ENCODE measurements at regions of chr11 and their contacts with region 1.

Region 1: DNA sequence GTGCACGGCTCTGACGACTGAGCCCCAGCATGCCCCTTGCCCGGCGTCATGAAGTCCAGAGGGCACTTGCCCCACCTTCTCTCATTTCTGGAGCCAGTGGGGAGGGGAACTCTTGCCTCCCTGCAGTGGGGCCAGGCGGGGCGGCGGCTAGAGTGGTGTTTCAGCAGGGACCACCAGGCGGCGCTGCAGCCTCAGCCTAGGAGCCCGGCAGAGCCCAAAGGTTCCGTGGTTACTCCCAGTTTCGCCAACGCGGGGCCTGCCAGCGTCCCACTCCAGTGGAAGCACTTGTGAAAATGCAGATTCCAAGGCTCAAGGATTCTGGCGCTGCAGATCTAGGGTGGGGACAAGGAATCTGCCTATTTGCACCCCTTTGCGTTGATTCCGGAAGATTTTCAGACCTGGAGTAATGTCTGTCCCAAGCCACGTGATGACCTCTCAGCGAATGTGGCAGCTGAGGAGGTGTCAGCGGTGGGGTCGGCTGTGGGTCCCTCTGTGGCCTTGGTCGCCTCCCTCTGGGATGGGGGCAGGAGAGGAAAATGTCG is 55.7 kb downstream of the CD82 start:
- DNase-seq: peak; percentile 68
- H3K4me3 Mint-ChIP-seq: no peak overlapping the region
- H3K27ac Mint-ChIP-seq: no peak overlapping the region
- H3K4me1 Mint-ChIP-seq: peaks cover 39% of the 10 kb centered on the region
- H3K27me3 Mint-ChIP-seq: no peaks in the 10 kb centered on the region

Region 2: GRCh38 chr11:44286268-44286880 is 334.8 kb before region 1 on chr11:
- CTCF ChIA-PET with region 1: no interaction called
- intact Hi-C with region 1: loop called (anchors 5 kb)
- DNase-seq: peak; percentile 77
- H3K4me3 Mint-ChIP-seq: no peak overlapping the region
- H3K27ac Mint-ChIP-seq: no peak overlapping the region
- H3K4me1 Mint-ChIP-seq: no peaks in the 10 kb centered on the region
- H3K27me3 Mint-ChIP-seq: no peaks in the 10 kb centered on the region

Region 3: DNA sequence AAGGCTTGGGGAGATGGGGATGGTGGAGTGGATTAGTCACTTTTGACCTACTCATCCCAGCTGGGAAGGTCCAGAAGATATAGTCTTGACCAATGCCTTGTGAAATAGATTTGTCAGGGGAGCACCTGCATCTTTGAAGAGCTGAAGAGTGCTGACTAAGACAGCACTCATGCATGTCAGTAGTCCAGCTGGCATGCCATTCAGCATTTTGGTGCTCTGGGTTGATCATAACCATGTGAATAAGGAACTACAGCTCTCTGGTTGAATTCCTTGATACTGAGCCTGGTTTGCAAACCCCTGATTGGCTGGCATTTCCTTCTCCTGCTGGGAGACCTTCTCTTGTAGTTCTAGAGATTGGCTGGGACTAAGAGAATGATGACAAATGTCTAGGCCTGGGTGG is 204.4 kb before region 1 on chr11:
- CTCF ChIA-PET with region 1: no interaction called
- intact Hi-C with region 1: no loop called
- DNase-seq: no peak
- H3K4me3 Mint-ChIP-seq: no peak overlapping the region
- H3K27ac Mint-ChIP-seq: no peak overlapping the region
- H3K4me1 Mint-ChIP-seq: no peaks in the 10 kb centered on the region
- H3K27me3 Mint-ChIP-seq: peaks cover 10% of the 10 kb centered on the region

Region 4: GRCh38 chr11:44556735-44557409 is 64.3 kb before region 1 on chr11:
- CTCF ChIA-PET with region 1: interaction called, 366 read pairs
- intact Hi-C with region 1: loop called (anchors 1 kb)
- DNase-seq: peak; percentile 85
- H3K4me3 Mint-ChIP-seq: no peak overlapping the region
- H3K27ac Mint-ChIP-seq: peak overlapping the region; percentile 83
- H3K4me1 Mint-ChIP-seq: peaks cover 25% of the 10 kb centered on the region
- H3K27me3 Mint-ChIP-seq: no peaks in the 10 kb centered on the region

Region 5: GRCh38 chr11:44596525-44597276 is 24.5 kb before region 1 on chr11:
- CTCF ChIA-PET with region 1: interaction called, 11 read pairs
- intact Hi-C with region 1: no loop called
- DNase-seq: peak; percentile 89
- H3K4me3 Mint-ChIP-seq: peak overlapping the region; percentile 39
- H3K27ac Mint-ChIP-seq: peak overlapping the region; percentile 88
- H3K4me1 Mint-ChIP-seq: peaks cover 81% of the 10 kb centered on the region
- H3K27me3 Mint-ChIP-seq: no peaks in the 10 kb centered on the region

Region 6: DNA sequence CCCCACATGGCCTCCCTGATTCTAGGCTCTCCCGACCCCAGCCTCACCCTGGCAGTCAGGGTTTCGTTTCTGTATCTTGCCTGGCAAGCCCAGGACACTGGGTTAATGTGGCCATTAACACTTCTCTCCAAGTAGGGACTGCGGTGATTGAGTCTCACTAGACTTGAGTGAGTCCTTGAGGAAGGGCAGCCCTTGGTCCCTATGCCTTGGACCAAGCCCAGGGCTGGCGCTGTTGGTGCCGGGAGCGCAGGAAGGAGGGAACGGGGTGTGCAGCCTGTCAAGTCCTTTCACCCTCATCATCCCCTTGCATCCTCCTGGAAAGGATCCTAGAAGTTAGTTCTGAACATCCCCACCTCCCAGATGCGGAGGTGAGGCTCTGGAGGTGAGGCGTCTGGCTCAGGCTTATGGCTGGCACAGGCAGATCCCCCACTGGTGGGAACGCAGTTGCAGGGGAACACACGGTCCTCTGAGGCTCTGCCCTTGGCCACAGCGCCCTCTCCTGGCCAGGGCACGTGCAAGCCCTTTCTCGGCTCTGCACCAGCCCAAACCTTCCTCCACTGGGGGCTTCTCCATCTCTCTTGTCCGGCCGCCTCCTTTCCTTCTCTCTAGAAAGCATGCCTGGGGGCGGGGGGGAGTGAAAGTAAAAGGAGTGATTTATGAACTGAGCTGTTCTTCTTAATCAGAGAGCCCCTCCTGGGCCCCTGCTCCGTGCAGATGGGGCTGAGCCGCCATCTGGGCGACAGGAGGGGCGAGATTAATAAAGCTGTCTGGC is 272.8 kb after region 1 on chr11:
- CTCF ChIA-PET with region 1: interaction called, 3 read pairs
- intact Hi-C with region 1: loop called (anchors 1 kb)
- DNase-seq: peak; percentile 73
- H3K4me3 Mint-ChIP-seq: no peak overlapping the region
- H3K27ac Mint-ChIP-seq: no peak overlapping the region
- H3K4me1 Mint-ChIP-seq: no peaks in the 10 kb centered on the region
- H3K27me3 Mint-ChIP-seq: no peaks in the 10 kb centered on the region

Region 7: DNA sequence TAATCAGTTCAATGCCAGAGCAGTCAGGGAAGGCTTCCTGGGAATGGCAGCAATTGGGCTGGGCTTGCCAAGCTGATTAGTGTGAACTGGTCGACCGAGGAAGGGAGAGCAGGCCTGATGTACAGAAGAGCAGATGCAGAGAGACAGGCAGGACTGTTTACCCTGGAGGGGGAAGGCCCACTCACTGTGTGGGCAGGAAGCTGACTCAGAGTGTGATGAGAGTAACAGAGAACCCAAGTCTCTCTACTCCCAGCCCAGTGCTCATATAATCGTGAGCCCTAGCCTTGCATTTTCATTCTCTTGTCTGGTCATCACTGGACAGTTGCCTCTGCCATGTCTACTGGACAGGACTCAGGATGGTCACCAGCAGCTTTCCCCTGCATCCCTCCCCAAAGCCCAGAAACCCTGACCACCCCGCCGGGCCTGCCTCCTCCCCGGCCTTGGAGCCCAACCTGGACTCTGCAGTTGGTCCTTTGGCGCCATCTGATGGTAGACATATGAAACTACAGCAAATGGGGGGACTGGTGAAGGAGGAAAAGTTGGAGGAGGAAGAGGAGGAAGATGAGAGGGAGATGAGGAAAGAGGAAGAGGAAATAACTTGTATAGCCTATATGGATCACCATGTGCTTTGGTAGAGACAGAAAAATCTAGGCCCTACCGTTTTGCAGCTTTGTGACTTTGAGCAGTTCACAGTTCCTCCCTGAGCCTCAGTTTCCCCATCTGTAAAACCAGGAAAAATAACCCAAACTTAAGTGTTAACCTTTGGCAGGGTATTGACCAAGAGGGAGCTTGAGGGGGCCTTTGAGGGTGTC is 481.8 kb after region 1 on chr11:
- CTCF ChIA-PET with region 1: no interaction called
- intact Hi-C with region 1: loop called (anchors 10 kb)
- DNase-seq: peak; percentile 85
- H3K4me3 Mint-ChIP-seq: peak overlapping the region; percentile 41
- H3K27ac Mint-ChIP-seq: peak overlapping the region; percentile 18
- H3K4me1 Mint-ChIP-seq: peaks cover 12% of the 10 kb centered on the region
- H3K27me3 Mint-ChIP-seq: peaks cover 12% of the 10 kb centered on the region

Measured in activated naive CD4-positive, alpha-beta T cell treated with anti-CD3 and anti-CD28 coated beads for 36 hours (primary cell).